MCF 10A (cell line): ENCODE measurements at regions of chr13 and their contacts with region 1.

Region 1: DNA sequence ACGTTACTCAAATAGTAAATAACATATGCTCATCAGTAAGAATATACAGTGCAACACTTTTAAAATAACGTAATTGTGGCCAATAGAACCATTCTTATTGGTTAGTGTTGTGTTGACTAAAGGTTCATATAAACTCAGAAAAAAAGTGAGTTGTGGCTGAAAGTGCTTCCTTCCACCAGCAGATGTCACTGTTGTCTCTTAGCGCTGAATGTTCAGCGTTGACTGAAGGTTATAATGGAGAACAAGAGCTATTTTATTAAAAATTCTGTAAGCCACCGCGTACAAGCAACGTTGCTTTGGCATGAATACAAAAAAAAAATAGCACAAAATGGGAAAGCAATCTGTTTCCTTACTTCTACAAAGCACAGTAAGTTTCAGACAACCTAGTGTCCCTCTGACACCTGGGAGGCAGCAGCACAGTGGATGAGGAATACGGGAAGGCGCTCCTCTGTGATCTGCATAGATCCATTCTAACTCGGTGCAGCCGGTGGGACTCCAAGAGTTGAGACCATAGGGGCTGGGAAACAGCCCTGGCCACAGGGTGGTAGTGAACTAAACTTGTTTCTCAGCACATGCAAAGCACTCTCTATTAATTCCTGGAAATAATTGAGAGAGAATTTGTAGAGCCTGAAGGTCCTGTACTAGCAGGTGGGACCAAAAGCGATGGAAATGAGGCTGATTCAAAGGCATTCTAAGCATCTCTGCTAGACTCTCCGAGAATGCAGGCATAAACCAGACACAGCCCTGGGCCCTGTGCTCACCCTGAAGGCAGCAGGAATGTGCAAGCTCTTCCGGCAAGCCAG is 24.0 kb upstream of the OXGR1 start:
- DNase-seq: peak; percentile 80
- H3K4me3 Mint-ChIP-seq: peak overlapping the region; percentile 11
- H3K27ac Mint-ChIP-seq: no peak overlapping the region
- H3K4me1 Mint-ChIP-seq: no peaks in the 10 kb centered on the region
- H3K27me3 Mint-ChIP-seq: peaks cover 27% of the 10 kb centered on the region
- CTCF ChIP-seq: peak; percentile 89

Region 2: DNA sequence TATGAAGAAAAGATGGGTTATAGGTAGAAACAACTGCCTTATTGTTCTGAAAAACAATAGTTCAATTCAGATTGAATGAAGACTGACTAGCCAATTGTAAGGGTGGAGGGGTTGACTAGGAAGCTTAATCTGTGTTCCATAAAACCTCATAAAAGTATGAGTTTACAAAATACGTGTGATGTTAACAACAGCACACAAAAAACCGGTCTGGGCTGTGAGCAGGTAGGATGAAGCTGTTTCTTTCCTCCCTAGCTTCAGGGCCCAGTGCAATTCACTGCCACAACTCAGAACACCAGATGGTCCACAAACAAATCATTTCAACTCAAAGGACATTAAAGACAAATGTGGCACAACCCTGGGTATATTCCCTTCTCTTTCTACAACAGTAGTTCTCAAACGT is 27.2 kb before region 1 on chr13:
- CTCF ChIA-PET with region 1: interaction called, 11 read pairs
- POLR2A ChIA-PET with region 1: no interaction called
- intact Hi-C with region 1: no loop called
- DNase-seq: no peak
- H3K4me3 Mint-ChIP-seq: no peak overlapping the region
- H3K27ac Mint-ChIP-seq: no peak overlapping the region
- H3K4me1 Mint-ChIP-seq: no peaks in the 10 kb centered on the region
- H3K27me3 Mint-ChIP-seq: peaks cover 57% of the 10 kb centered on the region
- CTCF ChIP-seq: no peak

Region 3: DNA sequence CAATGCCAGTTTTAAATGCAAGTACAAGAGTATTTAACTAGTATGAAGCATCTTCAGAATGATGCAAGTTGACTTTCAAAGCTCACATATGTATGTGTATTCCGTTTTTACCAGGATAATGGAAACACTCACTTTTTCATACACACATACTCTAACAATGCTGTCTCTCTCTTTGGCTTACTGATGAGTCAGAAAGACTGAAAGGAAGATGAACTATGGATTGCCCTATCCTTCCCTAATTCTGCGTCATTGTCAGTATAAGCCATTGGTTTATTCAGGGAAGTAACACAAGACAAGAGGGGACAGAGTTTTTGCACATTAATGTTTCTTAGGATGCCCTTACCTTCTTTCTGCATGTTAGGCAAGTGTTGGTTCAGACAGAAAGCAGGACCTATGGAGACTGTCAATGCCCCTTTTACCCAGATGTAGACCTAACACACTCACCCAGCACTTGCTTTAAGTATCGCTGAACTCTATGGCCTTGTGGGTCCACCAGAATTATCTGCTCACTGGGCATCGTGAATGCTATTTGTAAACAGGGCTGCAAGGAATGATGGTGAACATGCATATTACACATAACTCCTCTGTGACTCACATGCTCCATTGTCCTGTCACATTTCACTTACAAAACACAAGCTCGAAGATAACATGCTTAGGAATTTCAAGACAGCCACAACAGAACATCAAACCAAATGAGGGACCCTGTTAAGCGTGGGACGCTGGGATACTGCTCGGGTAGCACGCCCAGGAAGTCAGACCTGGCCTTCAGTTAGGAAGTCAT is 13.9 kb before region 1 on chr13:
- CTCF ChIA-PET with region 1: interaction called, 32 read pairs
- POLR2A ChIA-PET with region 1: interaction called, 3 read pairs
- intact Hi-C with region 1: no loop called
- DNase-seq: peak; percentile 38
- H3K4me3 Mint-ChIP-seq: no peak overlapping the region
- H3K27ac Mint-ChIP-seq: no peak overlapping the region
- H3K4me1 Mint-ChIP-seq: peaks cover 21% of the 10 kb centered on the region
- H3K27me3 Mint-ChIP-seq: no peaks in the 10 kb centered on the region
- CTCF ChIP-seq: no peak

Region 4: GRCh38 chr13:97030705-97031452 is 12.6 kb after region 1 on chr13:
- CTCF ChIA-PET with region 1: interaction called, 12 read pairs
- POLR2A ChIA-PET with region 1: no interaction called
- intact Hi-C with region 1: loop called (anchors 1 kb)
- DNase-seq: peak; percentile 51
- H3K4me3 Mint-ChIP-seq: no peak overlapping the region
- H3K27ac Mint-ChIP-seq: no peak overlapping the region
- H3K4me1 Mint-ChIP-seq: peaks cover 5% of the 10 kb centered on the region
- H3K27me3 Mint-ChIP-seq: no peaks in the 10 kb centered on the region
- CTCF ChIP-seq: peak; percentile 38

Region 5: GRCh38 chr13:97810152-97810551 is 791.9 kb after region 1 on chr13:
- CTCF ChIA-PET with region 1: no interaction called
- POLR2A ChIA-PET with region 1: no interaction called
- intact Hi-C with region 1: loop called (anchors 5 kb)
- DNase-seq: peak; percentile 48
- H3K4me3 Mint-ChIP-seq: no peak overlapping the region
- H3K27ac Mint-ChIP-seq: no peak overlapping the region
- H3K4me1 Mint-ChIP-seq: peaks cover 9% of the 10 kb centered on the region
- H3K27me3 Mint-ChIP-seq: peaks cover 25% of the 10 kb centered on the region
- CTCF ChIP-seq: peak; percentile 54

Region 6: DNA sequence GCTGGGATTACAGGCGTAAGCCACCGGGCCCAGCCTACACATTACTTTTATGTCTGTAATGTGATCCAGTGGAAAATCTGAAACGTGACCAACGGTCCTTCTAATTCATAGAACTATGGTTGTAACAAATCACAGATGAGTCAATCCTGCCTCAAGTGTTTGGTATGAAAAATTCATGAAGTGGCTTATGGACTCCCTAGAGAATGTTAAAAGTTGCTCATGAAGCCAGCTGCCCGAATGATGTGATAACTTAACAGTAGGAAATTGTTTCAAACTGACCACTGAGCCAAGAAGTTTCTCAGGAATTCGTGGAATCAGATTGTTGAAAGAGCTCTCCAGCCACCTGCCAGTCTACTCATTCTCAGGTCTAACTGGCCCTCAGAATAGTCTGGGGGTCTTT is 1065.3 kb after region 1 on chr13:
- CTCF ChIA-PET with region 1: no interaction called
- POLR2A ChIA-PET with region 1: no interaction called
- intact Hi-C with region 1: no loop called
- DNase-seq: peak; percentile 18
- H3K4me3 Mint-ChIP-seq: no peak overlapping the region
- H3K27ac Mint-ChIP-seq: no peak overlapping the region
- H3K4me1 Mint-ChIP-seq: no peaks in the 10 kb centered on the region
- H3K27me3 Mint-ChIP-seq: no peaks in the 10 kb centered on the region
- CTCF ChIP-seq: no peak